PC-3 (cell line): ENCODE measurements at regions of chr10 and their contacts with region 1.

Region 1: DNA sequence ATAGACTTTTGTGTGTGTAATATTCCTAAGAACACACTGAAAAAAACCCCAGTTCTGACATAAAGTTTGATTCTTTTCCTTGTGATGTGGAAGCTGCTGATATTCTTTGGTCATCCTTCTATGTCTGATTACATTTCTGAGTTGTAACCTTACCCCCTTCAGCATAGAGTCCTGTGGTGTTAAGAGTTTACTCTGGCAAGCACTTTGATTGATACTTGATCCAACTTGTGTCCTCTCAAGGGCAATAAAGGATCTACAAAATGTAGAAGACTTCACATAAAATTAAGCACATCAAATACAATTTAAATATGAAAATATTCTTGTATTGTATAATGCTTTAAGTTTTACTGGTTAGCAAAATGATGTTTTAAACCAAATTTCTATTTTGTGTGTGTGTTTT is 221.7 kb upstream of the DKK1 start:
- DNase-seq: no peak
- ATAC-seq: no peak
- H3K4me3 ChIP-seq: no peak overlapping the region
- H3K27ac ChIP-seq: no peak overlapping the region
- H3K4me1 ChIP-seq: no peaks in the 10 kb centered on the region
- H3K27me3 ChIP-seq: peaks cover 8% of the 10 kb centered on the region; the same call in 1 of the 2 replicates
- CTCF ChIP-seq: no peak

Region 2: DNA sequence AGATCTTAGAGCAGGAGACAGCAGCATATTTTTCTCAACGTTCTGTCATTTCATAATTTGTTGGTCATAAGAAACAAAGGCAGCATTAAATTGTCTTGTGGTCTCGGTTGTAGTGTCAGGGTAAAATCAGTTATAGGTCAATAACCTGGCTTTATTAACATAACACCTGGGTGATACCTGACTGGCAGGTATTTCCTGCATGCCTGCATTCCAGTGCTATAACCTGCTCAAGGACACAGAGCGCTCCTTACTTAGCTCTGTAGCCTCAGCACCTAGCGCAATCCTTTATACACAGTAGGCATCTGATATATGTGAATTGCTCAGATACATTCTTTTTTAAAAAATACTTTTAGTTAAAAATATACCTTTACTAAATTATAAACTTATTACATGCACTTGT is 1057.0 kb before region 1 on chr10:
- CTCF ChIA-PET with region 1: no interaction called
- POLR2A ChIA-PET with region 1: no interaction called
- intact Hi-C with region 1: loop called (anchors 5 kb)
- DNase-seq: no peak
- ATAC-seq: no peak
- H3K4me3 ChIP-seq: no peak overlapping the region
- H3K27ac ChIP-seq: no peak overlapping the region
- H3K4me1 ChIP-seq: no peaks in the 10 kb centered on the region
- H3K27me3 ChIP-seq: 0 out of 2 replicates have a peak, but pooled peaks cover 6% of the 10 kb centered on the region
- CTCF ChIP-seq: no peak